ENCODE measurements at regions of chr16 and their contacts with region 1.

Region 1: DNA sequence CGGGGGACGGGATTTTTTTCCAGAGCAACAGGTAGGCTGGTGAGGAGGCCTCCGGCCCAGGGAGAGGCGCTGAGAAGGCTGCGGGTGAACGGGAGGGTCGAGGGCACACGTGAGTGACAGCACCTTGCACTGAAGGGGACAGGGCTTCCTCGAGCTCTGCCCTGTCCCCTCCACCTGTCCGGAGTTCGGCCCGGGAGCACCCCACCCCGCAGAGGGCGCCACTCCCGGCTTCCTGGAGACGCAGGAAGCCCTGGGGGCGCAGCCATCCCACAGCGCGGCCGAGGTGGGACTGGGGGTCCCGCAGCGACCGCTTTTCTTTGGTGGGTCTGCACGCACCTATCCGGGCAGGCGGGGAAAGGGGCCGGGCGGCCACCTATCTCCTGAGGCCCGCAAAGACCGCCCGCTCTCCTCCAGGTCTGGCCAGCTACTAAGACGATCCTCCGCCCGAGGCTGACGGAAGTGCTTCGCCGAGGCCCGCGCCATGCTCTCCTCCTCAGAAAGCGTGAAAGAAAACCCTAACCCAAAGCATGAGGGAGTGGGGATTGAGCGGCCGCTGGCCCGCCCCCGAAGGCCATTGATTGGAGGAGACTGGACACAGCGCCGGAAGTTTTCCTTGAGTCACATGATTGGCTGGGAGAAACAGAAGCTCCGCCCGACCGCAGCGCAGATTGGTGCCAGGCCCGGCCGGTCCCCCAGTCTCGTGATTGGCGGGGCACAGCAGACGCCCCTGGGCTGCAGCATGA is 34.3 kb downstream of the DDX19A start:
- DNase-seq: peak; percentile 99
- ATAC-seq: peak; percentile 96
- H3K4me3 Mint-ChIP-seq: peak overlapping the region; percentile 92
- H3K27ac Mint-ChIP-seq: peak overlapping the region; percentile 93
- H3K4me1 Mint-ChIP-seq: peaks cover 14% of the 10 kb centered on the region
- H3K27me3 Mint-ChIP-seq: no peaks in the 10 kb centered on the region

Region 2: GRCh38 chr16:70162041-70162451 is 219.0 kb before region 1 on chr16:
- CTCF ChIA-PET with region 1: no interaction called
- DNase-seq: no peak
- ATAC-seq: no peak
- H3K4me3 Mint-ChIP-seq: no peak overlapping the region
- H3K27ac Mint-ChIP-seq: no peak overlapping the region
- H3K4me1 Mint-ChIP-seq: no peaks in the 10 kb centered on the region
- H3K27me3 Mint-ChIP-seq: no peaks in the 10 kb centered on the region

Region 3: DNA sequence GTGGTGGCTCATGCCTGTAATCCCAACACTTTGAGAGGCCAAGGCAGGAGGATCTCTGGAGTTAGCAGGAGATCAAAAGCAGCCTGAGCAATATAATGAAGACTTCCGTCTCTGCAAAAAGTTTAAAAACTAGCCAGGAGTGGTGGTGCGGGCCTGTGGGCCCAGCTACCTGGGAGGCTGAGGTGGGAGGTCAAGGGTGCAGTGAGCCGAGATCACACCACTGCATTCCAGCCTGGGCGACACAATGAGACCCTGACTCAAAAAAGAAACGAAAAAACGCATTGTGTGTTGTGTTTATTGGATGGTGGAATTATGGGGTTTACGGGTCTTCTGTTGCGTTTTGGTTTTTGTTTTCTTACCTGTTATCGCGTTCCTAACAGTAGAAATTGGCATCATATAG is 35.2 kb before region 1 on chr16:
- CTCF ChIA-PET with region 1: interaction called, 10 read pairs
- DNase-seq: no peak
- ATAC-seq: no peak
- H3K4me3 Mint-ChIP-seq: peak overlapping the region; percentile 98
- H3K27ac Mint-ChIP-seq: peak overlapping the region; percentile 99
- H3K4me1 Mint-ChIP-seq: peaks cover 41% of the 10 kb centered on the region
- H3K27me3 Mint-ChIP-seq: no peaks in the 10 kb centered on the region

Region 4: GRCh38 chr16:70370924-70371323 is 10.1 kb before region 1 on chr16:
- CTCF ChIA-PET with region 1: interaction called, 14 read pairs
- DNase-seq: no peak
- ATAC-seq: no peak
- H3K4me3 Mint-ChIP-seq: no peak overlapping the region
- H3K27ac Mint-ChIP-seq: no peak overlapping the region
- H3K4me1 Mint-ChIP-seq: peaks cover 5% of the 10 kb centered on the region
- H3K27me3 Mint-ChIP-seq: no peaks in the 10 kb centered on the region

Region 5: GRCh38 chr16:70391881-70392481 is 10.9 kb after region 1 on chr16:
- CTCF ChIA-PET with region 1: interaction called, 19 read pairs
- DNase-seq: no peak
- ATAC-seq: no peak
- H3K4me3 Mint-ChIP-seq: no peak overlapping the region
- H3K27ac Mint-ChIP-seq: no peak overlapping the region
- H3K4me1 Mint-ChIP-seq: peaks cover 15% of the 10 kb centered on the region
- H3K27me3 Mint-ChIP-seq: no peaks in the 10 kb centered on the region

Region 6: DNA sequence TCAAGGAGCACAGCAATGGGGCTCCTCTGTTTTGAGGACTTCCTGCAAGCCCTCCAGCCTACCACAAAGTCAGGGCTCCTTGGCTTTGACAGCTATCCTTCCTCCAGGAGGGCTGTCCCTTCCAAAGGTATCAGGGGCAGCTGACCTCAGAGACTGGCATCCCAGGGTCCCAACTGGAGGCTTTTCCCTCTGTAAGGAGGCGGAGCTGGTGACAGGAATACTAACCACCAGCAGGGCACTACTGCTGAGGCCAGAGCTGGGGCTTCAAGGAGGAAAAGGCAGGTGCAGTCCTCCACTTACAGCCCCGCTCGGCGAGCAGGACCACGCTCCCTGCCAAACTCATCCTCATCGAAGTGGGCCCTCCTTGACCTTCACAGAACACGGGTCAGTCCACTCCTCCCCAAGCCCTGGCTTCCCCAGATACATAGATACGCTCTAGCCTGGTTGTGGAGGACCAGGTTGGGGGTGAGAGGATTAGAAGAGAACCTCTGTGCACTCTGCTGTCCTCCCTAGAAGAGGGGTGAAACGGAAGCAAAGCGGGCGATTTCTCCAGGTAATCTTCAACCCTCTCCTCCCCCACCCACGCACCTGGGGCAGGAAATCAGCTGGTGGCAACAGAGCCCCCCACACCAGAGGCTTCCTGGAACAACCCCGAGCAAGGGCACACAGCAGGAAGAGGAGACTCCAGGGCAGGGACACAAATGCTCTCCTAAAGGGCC is 37.4 kb after region 1 on chr16:
- CTCF ChIA-PET with region 1: no interaction called
- DNase-seq: peak; percentile 46
- ATAC-seq: peak; percentile 32
- H3K4me3 Mint-ChIP-seq: no peak overlapping the region
- H3K27ac Mint-ChIP-seq: peak overlapping the region; percentile 72
- H3K4me1 Mint-ChIP-seq: peaks cover 31% of the 10 kb centered on the region
- H3K27me3 Mint-ChIP-seq: no peaks in the 10 kb centered on the region

Region 7: GRCh38 chr16:70430667-70431536 is 49.9 kb after region 1 on chr16:
- CTCF ChIA-PET with region 1: no interaction called
- DNase-seq: peak; percentile 56
- ATAC-seq: peak; percentile 65
- H3K4me3 Mint-ChIP-seq: peak overlapping the region; percentile 10
- H3K27ac Mint-ChIP-seq: peak overlapping the region; percentile 73
- H3K4me1 Mint-ChIP-seq: peaks cover 45% of the 10 kb centered on the region
- H3K27me3 Mint-ChIP-seq: no peaks in the 10 kb centered on the region

Region 8: DNA sequence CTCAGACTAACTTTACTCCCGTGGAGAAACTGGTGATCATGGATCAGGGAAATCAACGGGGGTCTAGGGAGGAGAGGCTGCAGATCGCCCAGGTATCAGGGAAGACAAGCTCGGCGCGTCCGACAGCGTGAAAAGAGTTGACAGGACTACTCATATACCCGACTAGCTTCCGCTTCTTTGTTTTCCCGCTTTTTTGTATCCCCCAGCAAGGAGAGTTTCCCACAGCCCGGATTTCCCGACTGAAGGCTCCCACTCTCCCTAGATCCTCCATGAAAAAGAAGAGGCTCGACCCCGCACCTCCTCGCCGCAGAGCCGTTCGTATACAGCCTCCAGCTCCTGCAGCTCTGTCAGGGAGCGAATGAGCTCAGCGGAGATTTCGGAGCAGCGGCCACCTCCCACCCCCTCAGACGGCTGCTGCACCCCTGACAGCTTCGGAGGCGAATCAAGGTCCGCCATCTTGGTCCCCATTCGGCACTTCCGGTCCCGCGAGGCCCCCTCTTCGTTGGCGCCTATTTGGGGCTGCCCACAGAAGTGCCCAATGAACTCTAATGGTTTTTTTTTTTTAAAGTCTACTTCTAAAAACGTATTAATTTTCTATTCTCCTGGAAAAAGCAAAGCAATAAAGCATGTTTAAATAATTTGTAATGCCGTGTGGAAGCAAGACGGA is 142.2 kb after region 1 on chr16 and contains the start of gene COG4:
- CTCF ChIA-PET with region 1: interaction called, 12 read pairs
- DNase-seq: peak; percentile 95
- ATAC-seq: peak; percentile 74
- H3K4me3 Mint-ChIP-seq: peak within 1 kb of the TSS; percentile 96
- H3K27ac Mint-ChIP-seq: peak within 1 kb of the TSS; percentile 97
- H3K4me1 Mint-ChIP-seq: peaks cover 49% of the 10 kb centered on the region
- H3K27me3 Mint-ChIP-seq: no peaks in the 10 kb centered on the region
- total RNA-seq, gene COG4: 67.3 to 72.5 TPM